ENCODE measurements at regions of chr3 and their contacts with region 1.

Region 1: DNA sequence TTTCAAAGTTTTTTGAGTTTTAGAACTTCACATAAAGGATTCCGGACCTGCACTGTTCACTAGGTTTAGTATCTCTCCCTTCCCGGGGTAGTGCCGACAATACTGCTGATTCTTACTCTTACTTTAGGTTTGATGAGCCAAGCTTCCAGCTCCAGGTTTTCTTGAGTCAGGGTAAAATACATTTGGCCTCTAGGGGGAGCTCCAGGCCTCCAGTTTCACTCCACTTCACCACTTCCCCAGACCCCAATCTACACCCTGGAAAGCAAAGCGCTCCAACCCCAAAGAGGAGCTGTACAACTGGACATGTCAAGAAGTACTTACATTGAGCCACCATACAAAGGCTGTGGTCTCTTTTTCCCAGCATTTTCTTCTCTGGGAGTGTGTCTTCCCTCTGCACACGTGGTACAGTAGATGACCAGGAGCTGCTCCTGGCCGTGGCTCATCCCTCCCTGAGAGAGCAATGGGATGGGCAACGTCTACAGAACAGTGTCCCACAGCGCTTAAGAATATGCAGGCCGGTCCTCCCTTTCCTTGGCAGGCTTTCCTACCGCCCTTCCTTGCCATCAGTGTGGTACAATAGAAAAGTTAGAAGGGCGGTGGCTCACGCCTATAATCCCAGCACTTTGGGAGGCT is 93.9 kb upstream of the CCDC80 start:
- DNase-seq: peak; percentile 70 to 92
- H3K4me3 ChIP-seq: no peak overlapping the region
- H3K27ac ChIP-seq: no peak overlapping the region
- H3K4me1 ChIP-seq: no peaks in the 10 kb centered on the region
- H3K27me3 ChIP-seq: no peaks in the 10 kb centered on the region
- CTCF ChIP-seq: peak; percentile 37 to 82 (median 81)
- EP300 ChIP-seq: no peak
- POLR2A ChIP-seq: no peak
- RAD21 ChIP-seq: peak; percentile 95 to 96

Region 2: DNA sequence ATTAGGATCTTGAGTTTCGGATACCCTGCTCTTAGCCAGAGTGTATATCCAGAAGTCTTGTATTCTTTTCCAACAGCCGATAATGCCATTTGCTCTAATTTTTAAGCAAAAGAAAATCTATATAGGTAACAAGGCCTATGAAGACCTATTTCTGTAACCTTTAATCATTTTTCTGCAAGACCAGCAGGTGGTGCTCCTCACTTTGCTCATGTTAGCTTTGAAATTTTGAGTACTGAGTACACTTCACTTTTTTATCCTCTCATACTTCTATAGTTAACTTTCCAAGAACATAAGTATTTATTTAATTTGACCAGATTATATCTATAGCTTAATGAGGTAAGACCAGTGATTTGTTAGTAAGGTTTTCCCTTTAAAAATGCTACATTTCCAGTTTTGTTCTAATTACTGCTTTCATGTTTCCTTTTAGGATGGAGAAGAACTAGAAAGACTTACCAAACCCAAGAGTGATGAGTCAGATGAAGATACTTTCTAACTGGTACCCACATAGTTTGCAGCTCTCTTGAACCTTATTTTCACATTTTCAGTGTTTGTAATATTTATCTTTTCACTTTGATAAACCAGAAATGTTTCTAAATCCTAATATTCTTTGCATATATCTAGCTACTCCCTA is 152.5 kb before region 1 on chr3:
- CTCF ChIA-PET with region 1: interaction called, 14 read pairs
- POLR2A ChIA-PET with region 1: no interaction called
- DNase-seq: no peak
- H3K4me3 ChIP-seq: no peak overlapping the region
- H3K27ac ChIP-seq: no peak overlapping the region
- H3K4me1 ChIP-seq: no peaks in the 10 kb centered on the region; a peak in 1 of 7 replicates
- H3K27me3 ChIP-seq: no peaks in the 10 kb centered on the region
- CTCF ChIP-seq: peak in 2 of 3 experiments; percentile 30 to 47; a peak in 2 of 4 replicates
- EP300 ChIP-seq: no peak
- POLR2A ChIP-seq: no peak
- RAD21 ChIP-seq: peak; percentile 74 to 80

Region 3: DNA sequence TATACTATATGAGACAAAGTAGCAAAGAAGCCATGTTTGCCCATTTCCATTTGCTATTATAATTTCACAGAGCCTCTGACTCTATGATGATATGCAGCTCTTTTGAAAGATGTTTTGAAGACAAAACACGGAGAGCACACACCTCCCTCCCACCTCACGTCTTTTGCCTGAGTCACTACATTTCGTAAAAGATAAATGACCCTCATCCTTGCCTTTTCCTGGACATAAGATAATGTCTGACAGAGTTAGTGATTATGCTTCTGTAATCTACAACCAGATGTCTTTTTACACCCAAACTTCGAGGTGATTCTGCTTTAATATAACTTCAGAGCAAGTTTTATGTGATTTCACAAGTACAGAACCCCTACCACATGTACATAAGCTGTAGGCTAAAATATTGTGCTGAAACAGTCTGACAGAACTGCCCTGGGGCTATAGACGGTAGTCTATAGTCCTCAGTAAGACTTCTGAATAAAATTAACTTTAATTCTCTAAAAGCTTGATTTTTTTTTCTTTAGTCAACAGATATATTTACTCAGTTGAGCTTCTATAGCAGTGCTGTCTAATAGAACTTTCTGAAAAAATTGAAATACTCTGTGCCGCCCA is 11.9 kb after region 1 on chr3:
- CTCF ChIA-PET with region 1: interaction called, 44 read pairs
- POLR2A ChIA-PET with region 1: interaction called, 3 read pairs
- DNase-seq: no peak
- H3K4me3 ChIP-seq: no peak overlapping the region
- H3K27ac ChIP-seq: no peak overlapping the region
- H3K4me1 ChIP-seq: peaks cover 0 to 4% (median 2%) of the 10 kb centered on the region in 4 experiments; a peak in 3 of 7 replicates
- H3K27me3 ChIP-seq: no peaks in the 10 kb centered on the region
- CTCF ChIP-seq: no peak
- EP300 ChIP-seq: no peak
- POLR2A ChIP-seq: no peak
- RAD21 ChIP-seq: no peak

Region 4: GRCh38 chr3:112751564-112752512 is 17.0 kb after region 1 on chr3:
- CTCF ChIA-PET with region 1: interaction called, 44 read pairs
- POLR2A ChIA-PET with region 1: interaction called, 3 read pairs
- DNase-seq: no peak
- H3K4me3 ChIP-seq: no peak overlapping the region
- H3K27ac ChIP-seq: no peak overlapping the region
- H3K4me1 ChIP-seq: 0 out of 7 replicates have a peak, but pooled peaks cover 0 to 2% (median 0%) of the 10 kb centered on the region in 4 experiments
- H3K27me3 ChIP-seq: no peaks in the 10 kb centered on the region
- CTCF ChIP-seq: no peak
- EP300 ChIP-seq: no peak
- POLR2A ChIP-seq: no peak
- RAD21 ChIP-seq: no peak

Region 5: GRCh38 chr3:112814266-112814665 is 79.4 kb after region 1 on chr3:
- CTCF ChIA-PET with region 1: interaction called, 31 read pairs
- POLR2A ChIA-PET with region 1: no interaction called
- DNase-seq: no peak
- H3K4me3 ChIP-seq: no peak overlapping the region
- H3K27ac ChIP-seq: no peak overlapping the region
- H3K4me1 ChIP-seq: no peaks in the 10 kb centered on the region
- H3K27me3 ChIP-seq: no peaks in the 10 kb centered on the region
- CTCF ChIP-seq: peak in 2 of 3 experiments; percentile 30 to 42; a peak in 2 of 4 replicates
- EP300 ChIP-seq: no peak
- POLR2A ChIP-seq: no peak
- RAD21 ChIP-seq: peak; percentile 60 to 75

Region 6: DNA sequence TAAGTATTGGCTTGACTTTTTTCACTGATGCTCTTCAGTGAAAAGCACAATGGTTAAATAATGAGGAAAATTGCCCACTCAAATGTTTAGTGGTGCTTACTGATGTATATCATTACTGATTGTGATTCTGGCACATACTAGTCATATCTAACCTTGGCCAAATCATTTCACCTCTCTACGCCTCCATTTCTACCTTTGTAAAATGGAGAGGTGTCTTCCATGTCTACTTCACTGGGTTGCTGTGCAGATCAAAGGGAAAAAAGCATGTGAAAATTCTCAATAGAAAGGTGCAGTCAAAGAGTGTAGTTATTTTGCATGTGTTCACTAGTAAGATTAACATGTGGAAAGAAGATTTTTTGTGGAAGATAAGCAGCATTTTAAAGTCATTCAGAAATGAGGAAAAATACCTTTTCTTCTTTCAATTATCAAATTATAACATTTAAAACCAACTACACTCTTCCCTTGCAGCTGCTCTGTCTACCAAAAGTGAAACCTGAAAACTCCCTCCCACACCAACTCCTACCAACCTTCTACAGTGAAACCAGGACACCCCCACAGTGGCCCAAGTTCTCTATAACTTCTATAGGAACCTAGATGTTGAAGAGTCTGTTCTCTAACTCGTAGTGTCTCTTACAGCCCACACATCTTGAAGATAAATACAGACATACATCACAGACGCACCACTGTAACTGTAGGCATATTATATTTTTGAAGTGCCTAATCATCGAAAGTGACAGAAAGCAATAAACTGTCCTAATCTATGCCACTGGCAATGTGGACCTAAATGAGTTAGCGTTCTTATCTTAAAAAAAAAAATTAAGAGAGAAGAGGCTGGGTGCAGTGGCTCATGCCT is 238.7 kb after region 1 on chr3:
- CTCF ChIA-PET with region 1: interaction called, 32 read pairs
- POLR2A ChIA-PET with region 1: no interaction called
- DNase-seq: no peak
- H3K4me3 ChIP-seq: no peak overlapping the region
- H3K27ac ChIP-seq: no peak overlapping the region
- H3K4me1 ChIP-seq: no peaks in the 10 kb centered on the region
- H3K27me3 ChIP-seq: no peaks in the 10 kb centered on the region
- CTCF ChIP-seq: no peak
- EP300 ChIP-seq: no peak
- POLR2A ChIP-seq: no peak
- RAD21 ChIP-seq: no peak

Region 7: GRCh38 chr3:112979240-112979832 is 244.5 kb after region 1 on chr3:
- CTCF ChIA-PET with region 1: interaction called, 32 read pairs
- POLR2A ChIA-PET with region 1: no interaction called
- DNase-seq: no peak
- H3K4me3 ChIP-seq: no peak overlapping the region
- H3K27ac ChIP-seq: no peak overlapping the region
- H3K4me1 ChIP-seq: no peaks in the 10 kb centered on the region
- H3K27me3 ChIP-seq: no peaks in the 10 kb centered on the region
- CTCF ChIP-seq: peak in 2 of 3 experiments; percentile 21 to 40; a peak in 2 of 4 replicates
- EP300 ChIP-seq: no peak
- POLR2A ChIP-seq: no peak
- RAD21 ChIP-seq: peak in 1 of 2 experiments; percentile 53